ENCODE measurements at regions of chr11 and their contacts with region 1.

Region 1: DNA sequence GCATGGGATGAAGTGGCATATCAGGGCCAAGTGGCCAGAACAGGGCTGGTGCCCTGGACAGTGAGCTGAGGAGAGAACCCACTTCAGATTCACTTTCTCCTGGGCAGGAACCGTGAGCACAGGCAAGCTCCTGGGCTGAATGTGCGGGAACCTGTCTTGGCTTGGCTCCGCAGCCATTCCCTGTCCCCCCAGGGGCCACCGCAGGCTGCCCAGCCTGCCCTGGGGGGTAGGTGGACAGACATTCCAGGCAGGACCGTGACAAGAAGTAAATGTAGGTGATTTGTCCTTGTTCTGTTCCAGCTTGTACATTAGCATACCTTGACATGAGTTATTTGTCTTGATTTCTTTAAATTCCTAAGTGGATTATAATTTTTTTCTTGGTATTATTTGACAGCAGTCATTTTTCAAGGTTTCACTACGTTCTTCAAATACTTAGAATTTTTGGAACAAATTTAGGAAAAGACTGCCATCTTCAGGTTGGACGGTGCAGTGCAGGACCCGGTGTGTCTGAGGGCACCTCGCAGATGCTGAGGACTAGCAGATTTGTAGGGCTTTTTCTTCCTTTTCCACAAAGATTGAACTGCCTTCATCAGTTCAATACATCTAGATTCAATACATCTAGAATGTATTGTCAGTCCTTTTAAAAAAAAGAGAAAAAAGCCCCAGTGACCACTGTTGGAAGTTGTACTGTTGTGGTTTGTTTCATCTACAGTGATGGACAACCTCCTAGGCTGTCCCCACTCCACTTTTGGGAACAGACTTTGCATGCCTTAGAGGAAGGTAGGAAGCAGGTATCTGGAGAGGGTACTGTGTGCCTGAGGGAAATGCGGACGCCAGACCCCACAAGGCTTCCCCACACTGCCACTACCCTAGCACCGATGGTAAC is 115.1 kb upstream of the RASSF10 start:
- DNase-seq: peak; percentile 42
- H3K4me3 ChIP-seq: no peak overlapping the region
- H3K27ac ChIP-seq: no peak overlapping the region
- H3K4me1 ChIP-seq: peaks cover 18% of the 10 kb centered on the region
- H3K27me3 ChIP-seq: no peaks in the 10 kb centered on the region
- CTCF ChIP-seq: peak; percentile 83 to 91

Region 2: DNA sequence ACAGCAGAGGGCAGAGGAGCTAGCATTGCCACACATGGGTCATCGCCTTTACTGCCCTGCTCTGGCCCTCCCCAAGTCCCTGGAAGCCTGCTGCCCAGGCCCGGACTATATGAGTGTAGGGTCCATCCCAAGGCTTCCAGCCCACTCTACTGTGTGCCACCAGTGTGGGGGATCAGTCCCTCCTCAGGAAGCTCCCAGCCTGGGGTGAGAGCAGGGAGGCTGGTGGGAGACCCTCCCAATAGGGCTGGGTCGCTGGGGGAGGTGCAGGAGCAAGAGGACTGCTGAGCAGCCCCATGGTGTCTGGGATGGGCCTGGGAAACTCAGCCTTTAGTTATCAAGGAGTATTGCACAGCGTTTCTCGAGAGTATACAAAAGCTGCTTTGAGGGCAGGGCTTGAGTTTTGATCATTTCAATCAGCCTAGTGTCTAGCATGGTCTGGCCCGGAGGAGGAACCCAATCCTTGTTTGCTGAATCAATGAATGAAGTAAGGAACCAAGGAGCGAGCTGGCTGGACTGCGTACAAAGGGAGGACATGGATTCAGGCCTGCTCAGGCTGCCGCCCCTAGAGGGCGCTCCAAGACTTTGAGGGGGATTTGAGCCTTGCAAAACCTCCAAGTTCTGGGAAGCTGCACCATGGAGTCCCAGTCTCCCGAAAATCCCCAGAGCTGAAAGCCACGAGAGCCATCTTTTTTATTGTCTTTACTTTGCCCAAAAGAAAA is 605.7 kb before region 1 on chr11:
- CTCF ChIA-PET with region 1: no interaction called
- dilution Hi-C with region 1: no loop called
- in situ Hi-C with region 1: no loop called
- intact Hi-C with region 1: loop called (anchors 1 kb)
- DNase-seq: peak; percentile 76
- H3K4me3 ChIP-seq: no peak overlapping the region
- H3K27ac ChIP-seq: peak overlapping the region; percentile 77
- H3K4me1 ChIP-seq: peaks cover 49% of the 10 kb centered on the region
- H3K27me3 ChIP-seq: no peaks in the 10 kb centered on the region
- CTCF ChIP-seq: peak; percentile 91 to 98

Region 3: GRCh38 chr11:12508151-12508751 is 385.8 kb before region 1 on chr11:
- CTCF ChIA-PET with region 1: no interaction called
- dilution Hi-C with region 1: no loop called
- in situ Hi-C with region 1: no loop called
- intact Hi-C with region 1: loop called (anchors 10 kb)
- DNase-seq: no peak
- H3K4me3 ChIP-seq: no peak overlapping the region
- H3K27ac ChIP-seq: no peak overlapping the region
- H3K4me1 ChIP-seq: no peaks in the 10 kb centered on the region
- H3K27me3 ChIP-seq: no peaks in the 10 kb centered on the region
- CTCF ChIP-seq: no peak

Region 4: GRCh38 chr11:12853652-12854296 is 40.3 kb before region 1 on chr11:
- CTCF ChIA-PET with region 1: no interaction called
- dilution Hi-C with region 1: no loop called
- in situ Hi-C with region 1: no loop called
- intact Hi-C with region 1: no loop called
- DNase-seq: no peak
- H3K4me3 ChIP-seq: no peak overlapping the region
- H3K27ac ChIP-seq: no peak overlapping the region
- H3K4me1 ChIP-seq: peaks cover 18% of the 10 kb centered on the region
- H3K27me3 ChIP-seq: no peaks in the 10 kb centered on the region
- CTCF ChIP-seq: no peak

Measured in mammary epithelial cell (primary cell).